ENCODE measurements at regions of chr3 and their contacts with region 1.

Region 1: GRCh38 chr3:196192036-196192523 is 19.1 kb downstream of the ZDHHC19 start:
- DNase-seq: no peak

Region 2: DNA sequence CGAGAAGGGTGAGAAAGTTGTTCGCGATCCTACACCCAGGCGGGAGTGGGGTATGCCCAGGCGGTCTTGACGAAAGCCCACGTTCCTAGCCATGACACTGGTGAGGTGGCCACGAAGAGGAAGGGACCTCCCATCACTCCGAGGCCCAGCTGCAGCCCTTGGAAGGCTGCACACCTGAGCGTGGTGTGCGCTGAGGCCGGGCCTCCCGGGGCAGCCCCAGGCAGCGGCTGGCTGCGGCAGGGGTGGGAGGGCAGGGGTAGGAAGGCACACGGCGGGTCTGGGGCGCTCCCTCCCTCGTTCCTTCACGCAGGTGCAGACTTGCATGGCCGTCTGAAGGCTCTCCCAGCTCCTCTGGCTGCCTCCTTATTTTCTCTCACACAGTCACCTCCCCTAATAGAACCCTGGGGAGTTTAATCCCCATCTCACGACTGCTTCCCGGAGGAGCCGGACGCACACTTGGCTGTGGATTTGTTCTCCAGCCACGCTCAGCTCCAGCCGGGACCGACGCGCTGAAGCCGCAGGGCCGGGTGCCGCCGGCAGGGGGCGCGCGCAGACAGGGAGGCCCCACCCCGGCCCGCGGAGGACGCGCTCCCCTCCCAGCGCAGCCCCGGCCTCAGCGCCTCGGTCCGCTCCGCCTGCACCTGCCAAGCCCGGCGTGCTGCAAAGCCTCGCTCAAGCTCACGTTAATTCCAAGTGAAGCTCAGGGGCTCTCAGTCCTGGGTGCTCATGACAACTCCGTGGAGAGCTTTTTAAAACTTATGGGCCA is 342.6 kb before region 1 on chr3:
- intact Hi-C with region 1: loop called (anchors 10 kb)
- DNase-seq: peak in 3 of 10 donors; percentile 64 to 78 (median 65)

Region 3: DNA sequence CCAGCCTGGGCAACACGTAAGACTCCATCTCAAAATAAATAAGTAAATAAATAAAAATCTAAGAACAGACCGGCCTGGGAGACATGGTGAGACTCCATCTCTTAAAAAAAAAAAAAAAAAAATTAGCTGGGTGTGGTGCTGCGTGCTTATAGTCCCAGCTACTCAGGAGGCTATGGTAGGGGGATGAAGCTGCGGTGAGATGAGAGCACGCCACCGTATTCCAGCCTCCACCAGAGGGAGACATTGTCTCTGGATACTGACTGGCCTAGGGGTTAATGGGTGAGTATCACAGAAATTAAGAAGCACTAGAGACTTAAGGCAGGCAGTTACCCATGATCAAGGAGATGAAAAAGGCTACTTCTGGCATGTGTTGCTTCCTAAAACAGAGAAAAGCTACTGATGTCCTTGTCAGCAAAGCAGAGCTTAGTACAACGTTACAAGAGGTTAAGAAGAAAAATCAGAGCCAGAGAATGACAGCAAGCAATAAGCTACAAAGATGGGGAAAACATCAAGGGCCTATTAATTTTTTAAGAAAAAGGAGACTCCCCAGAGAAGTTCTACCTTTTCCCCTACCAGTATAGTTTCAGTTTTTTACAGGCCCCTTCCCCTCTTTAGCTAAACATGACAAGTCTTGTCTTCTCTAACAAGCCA is 118.8 kb before region 1 on chr3:
- intact Hi-C with region 1: loop called (anchors 1 kb)
- DNase-seq: peak in 6 of 10 donors; percentile 20 to 90 (median 67)